ENCODE measurements at regions of chr5 and their contacts with region 1.

Region 1: DNA sequence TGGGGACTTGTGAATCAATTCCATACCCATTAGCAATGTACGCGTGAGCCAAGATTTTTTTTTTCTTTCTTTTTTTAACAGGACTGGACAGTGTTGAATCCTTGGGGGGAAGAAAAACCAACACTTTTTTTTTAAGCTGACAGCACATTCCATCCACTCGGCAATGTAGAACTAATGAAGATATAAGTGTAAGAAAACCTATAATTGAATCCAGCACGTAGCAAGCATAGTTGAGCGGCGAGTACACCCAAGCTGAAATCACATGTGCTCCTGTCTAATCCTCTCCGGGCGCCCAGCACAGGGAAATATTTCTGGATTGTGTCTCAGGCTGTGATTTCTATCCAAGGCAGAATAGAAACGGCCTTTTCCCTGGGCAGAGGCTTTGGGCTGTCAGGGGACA is 118.2 kb downstream of the BOD1 start:
- DNase-seq: no peak
- H3K4me3 ChIP-seq: no peak overlapping the region
- H3K27ac ChIP-seq: no peak overlapping the region
- H3K4me1 ChIP-seq: no peaks in the 10 kb centered on the region
- H3K27me3 ChIP-seq: no peaks in the 10 kb centered on the region
- CTCF ChIP-seq: no peak

Region 2: GRCh38 chr5:173412566-173412965 is 85.7 kb before region 1 on chr5:
- CTCF ChIA-PET with region 1: no interaction called
- dilution Hi-C with region 1: loop called (anchors 5 kb)
- in situ Hi-C with region 1: no loop called
- intact Hi-C with region 1: no loop called
- DNase-seq: no peak
- H3K4me3 ChIP-seq: no peak overlapping the region
- H3K27ac ChIP-seq: no peak overlapping the region
- H3K4me1 ChIP-seq: no peaks in the 10 kb centered on the region
- H3K27me3 ChIP-seq: no peaks in the 10 kb centered on the region
- CTCF ChIP-seq: no peak

Region 3: GRCh38 chr5:173536312-173536641 is 38.0 kb after region 1 on chr5:
- CTCF ChIA-PET with region 1: no interaction called
- dilution Hi-C with region 1: loop called (anchors 5 kb)
- in situ Hi-C with region 1: no loop called
- intact Hi-C with region 1: loop called (anchors 5 kb)
- DNase-seq: no peak
- H3K4me3 ChIP-seq: no peak overlapping the region
- H3K27ac ChIP-seq: no peak overlapping the region
- H3K4me1 ChIP-seq: no peaks in the 10 kb centered on the region
- H3K27me3 ChIP-seq: no peaks in the 10 kb centered on the region
- CTCF ChIP-seq: no peak

Region 4: DNA sequence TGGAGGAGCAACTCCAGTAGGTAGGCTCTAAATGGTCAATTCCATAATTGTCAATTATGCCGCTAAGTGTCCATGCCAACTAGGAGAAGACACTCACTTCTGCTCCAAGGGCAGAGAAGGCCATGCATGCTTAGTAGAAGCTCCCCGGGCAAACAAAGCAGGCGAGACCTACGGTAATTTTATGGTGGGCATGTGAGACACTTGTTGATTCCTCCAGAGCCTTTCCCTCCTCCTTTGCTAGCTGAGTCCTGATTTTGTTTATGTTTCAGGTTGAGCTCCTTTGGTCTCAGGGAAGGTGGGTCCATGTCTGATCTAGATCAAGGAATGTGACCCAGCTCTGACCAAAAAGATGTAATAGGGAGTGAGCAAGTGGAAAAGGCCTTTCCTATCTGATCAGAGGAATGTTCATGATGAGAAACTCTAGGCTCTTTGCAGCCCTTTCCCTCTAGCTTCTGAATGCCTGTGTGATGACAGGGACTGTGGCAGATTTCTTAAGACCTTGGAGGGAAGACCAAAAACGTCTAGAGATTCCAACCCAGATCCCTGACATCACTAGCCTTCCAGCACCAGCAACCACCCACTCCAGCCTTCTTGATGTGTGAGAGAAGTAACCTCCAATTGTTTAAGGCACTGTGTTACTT is 382.1 kb after region 1 on chr5:
- CTCF ChIA-PET with region 1: no interaction called
- dilution Hi-C with region 1: no loop called
- in situ Hi-C with region 1: no loop called
- intact Hi-C with region 1: no loop called
- DNase-seq: peak; percentile 44
- H3K4me3 ChIP-seq: no peak overlapping the region
- H3K27ac ChIP-seq: no peak overlapping the region
- H3K4me1 ChIP-seq: peaks cover 27% of the 10 kb centered on the region
- H3K27me3 ChIP-seq: no peaks in the 10 kb centered on the region
- CTCF ChIP-seq: no peak

Region 5: DNA sequence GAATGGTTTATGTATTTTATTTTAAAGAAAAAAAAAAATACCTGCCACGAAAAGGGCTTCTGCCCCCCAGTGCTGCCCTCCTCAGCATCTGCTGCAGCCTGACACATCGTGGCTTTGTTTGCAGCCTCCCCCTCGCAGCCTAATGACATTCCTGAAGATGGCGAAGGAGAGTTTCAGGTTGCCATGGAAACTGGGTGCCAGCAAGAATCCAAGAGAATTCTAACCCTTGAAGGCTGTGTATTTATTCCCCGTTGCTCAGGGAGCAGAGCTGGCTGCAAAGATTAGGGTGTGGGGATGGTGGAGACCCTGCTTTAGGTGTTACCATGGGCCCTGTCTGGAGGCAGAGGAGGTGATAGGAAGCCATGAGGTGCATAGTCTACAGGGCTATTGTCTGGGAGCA is 673.9 kb after region 1 on chr5:
- CTCF ChIA-PET with region 1: no interaction called
- dilution Hi-C with region 1: no loop called
- in situ Hi-C with region 1: no loop called
- intact Hi-C with region 1: no loop called
- DNase-seq: no peak
- H3K4me3 ChIP-seq: no peak overlapping the region
- H3K27ac ChIP-seq: no peak overlapping the region
- H3K4me1 ChIP-seq: no peaks in the 10 kb centered on the region
- H3K27me3 ChIP-seq: no peaks in the 10 kb centered on the region
- CTCF ChIP-seq: no peak

Measured in mammary epithelial cell (primary cell).